ENCODE measurements at regions of chr20 and their contacts with region 1.

Region 1: GRCh38 chr20:59495894-59496510 is 108.3 kb upstream of the PHACTR3 start:
- DNase-seq: peak; percentile 69 to 78
- ATAC-seq: peak in 3 of 4 donors; percentile 30 to 67 (median 49)
- H3K4me3 ChIP-seq: no peak overlapping the region
- H3K27ac ChIP-seq: no peak overlapping the region
- H3K4me1 ChIP-seq: no peaks in the 10 kb centered on the region
- H3K27me3 ChIP-seq: peaks cover 0 to 7% (median 5%) of the 10 kb centered on the region in 3 donors
- CTCF ChIP-seq: peak; percentile 75

Region 2: DNA sequence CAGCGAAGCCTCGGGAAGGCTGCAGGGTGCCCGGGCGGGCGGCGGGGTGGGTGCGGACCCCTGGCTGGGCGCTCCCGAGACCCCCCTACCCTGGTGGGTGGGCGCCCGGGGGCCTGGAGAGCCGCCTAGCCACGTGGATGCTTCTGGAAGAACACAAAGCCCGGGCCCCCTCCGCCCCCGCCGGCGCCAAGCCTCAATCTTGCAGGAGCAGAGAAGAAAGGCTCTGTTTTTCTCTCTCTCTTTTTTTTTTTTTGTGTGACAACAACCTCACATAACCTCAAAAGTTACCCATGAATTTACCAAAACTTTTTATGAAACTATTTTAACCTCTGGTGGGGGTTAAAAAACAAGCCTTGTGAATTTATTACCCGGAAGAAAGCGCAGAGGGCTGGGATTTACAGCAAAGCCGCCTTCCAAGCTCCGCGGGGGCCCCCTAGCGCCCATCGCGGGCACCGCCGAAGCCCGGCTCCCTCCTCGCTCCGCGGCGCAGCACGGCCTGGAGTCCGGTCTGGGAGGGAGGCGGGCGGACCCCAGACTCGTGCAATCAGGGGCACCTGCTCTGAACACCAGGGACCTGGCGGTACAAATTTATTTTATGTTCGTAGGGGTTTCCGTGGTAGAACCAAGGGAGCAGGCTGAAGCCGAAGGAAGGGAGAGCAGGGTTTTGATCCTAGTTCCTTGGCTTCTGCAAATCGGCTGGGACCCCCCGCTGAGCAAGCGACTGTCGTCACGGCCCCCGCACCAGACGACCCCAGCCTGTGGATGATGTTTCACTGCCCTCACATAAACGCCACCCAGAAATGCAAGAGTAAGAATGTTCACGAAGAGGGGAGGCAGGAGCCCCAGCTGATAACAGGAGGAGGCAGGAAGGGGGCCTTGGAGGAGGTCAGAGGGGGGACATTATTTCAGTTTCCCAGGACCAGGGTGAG is 273.5 kb before region 1 on chr20:
- intact Hi-C with region 1: loop called in 1 of 2 experiments (anchors 10 kb)
- DNase-seq: peak; percentile 81 to 86
- ATAC-seq: peak; percentile 87 to 99 (median 94)
- H3K4me3 ChIP-seq: peak overlapping the region; percentile 75
- H3K27ac ChIP-seq: no peak overlapping the region
- H3K4me1 ChIP-seq: peaks cover 12% of the 10 kb centered on the region
- H3K27me3 ChIP-seq: peaks cover 0 to 28% (median 3%) of the 10 kb centered on the region in 3 donors
- CTCF ChIP-seq: peak; percentile 91

Region 3: DNA sequence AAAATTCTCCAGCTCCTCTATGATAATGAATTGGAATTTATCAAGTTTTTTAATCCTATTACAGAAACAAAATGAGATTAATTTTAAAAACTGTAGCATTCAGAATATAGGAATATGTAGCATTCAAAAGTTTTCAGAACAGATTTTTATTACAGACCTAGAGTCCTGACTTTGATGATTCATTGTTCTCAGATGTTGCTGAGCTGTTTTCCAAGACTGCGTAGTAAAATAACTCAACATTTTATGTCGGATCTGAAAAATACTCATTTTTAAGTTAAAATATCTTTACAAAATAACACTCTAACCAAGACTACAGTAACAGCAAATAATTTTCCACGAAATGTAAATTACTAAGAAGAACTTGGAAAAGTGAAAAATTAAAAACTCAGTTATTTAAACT is 370.3 kb after region 1 on chr20:
- intact Hi-C with region 1: no loop called
- DNase-seq: no peak
- ATAC-seq: no peak
- H3K4me3 ChIP-seq: no peak overlapping the region
- H3K27ac ChIP-seq: no peak overlapping the region
- H3K4me1 ChIP-seq: peaks cover 10% of the 10 kb centered on the region
- H3K27me3 ChIP-seq: no peaks in the 10 kb centered on the region
- CTCF ChIP-seq: no peak